HAP-1 (cell line): ENCODE measurements at regions of chr6 and their contacts with region 1.

Region 1: GRCh38 chr6:4941782-4942672 is 61.8 kb downstream of the RPP40 start:
- DNase-seq: peak; percentile 52 to 77
- H3K4me3 ChIP-seq: no peak overlapping the region
- H3K4me1 ChIP-seq: peaks cover 29% of the 10 kb centered on the region
- H3K27me3 ChIP-seq: no peaks in the 10 kb centered on the region

Region 2: GRCh38 chr6:4788953-4789584 is 153.0 kb before region 1 on chr6:
- in situ Hi-C with region 1: loop called (anchors 10 kb)
- DNase-seq: no peak
- H3K4me3 ChIP-seq: no peak overlapping the region
- H3K4me1 ChIP-seq: peaks cover 14% of the 10 kb centered on the region
- H3K27me3 ChIP-seq: no peaks in the 10 kb centered on the region

Region 3: GRCh38 chr6:5072440-5072839 is 130.4 kb after region 1 on chr6:
- in situ Hi-C with region 1: no loop called
- DNase-seq: no peak
- H3K4me3 ChIP-seq: no peak overlapping the region
- H3K4me1 ChIP-seq: no peaks in the 10 kb centered on the region
- H3K27me3 ChIP-seq: no peaks in the 10 kb centered on the region